MCF 10A (cell line): ENCODE measurements at regions of chr12 and their contacts with region 1.

Region 1: GRCh38 chr12:128771681-128772080 is 52.1 kb downstream of the SLC15A4 start:
- DNase-seq: peak; percentile 78
- H3K4me3 Mint-ChIP-seq: no peak overlapping the region
- H3K27ac Mint-ChIP-seq: no peak overlapping the region
- H3K4me1 Mint-ChIP-seq: no peaks in the 10 kb centered on the region
- H3K27me3 Mint-ChIP-seq: peaks cover 9% of the 10 kb centered on the region
- CTCF ChIP-seq: no peak

Region 2: DNA sequence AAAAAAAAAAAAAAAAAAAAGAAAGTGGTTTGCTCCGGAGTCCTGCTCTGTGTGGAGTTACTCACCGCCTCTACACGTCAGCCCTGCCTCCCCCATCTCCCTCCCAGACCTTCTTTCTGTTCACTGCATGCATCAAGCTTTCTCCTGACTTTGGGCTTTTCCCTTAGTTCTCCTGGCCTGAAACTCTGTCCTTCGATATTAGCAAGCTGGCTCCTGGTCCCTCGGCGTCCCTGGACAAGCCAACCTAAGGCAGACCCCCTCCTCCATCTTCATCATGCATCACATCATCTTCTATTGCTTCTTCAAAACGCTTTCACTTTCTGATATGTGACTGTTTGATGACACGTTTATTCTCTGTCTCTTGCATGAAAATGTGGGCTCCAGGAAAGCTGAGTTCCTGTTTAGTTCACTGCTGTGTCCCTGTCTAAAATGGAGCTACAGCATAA is 11.5 kb after region 1 on chr12:
- CTCF ChIA-PET with region 1: interaction called, 37 read pairs
- POLR2A ChIA-PET with region 1: no interaction called
- intact Hi-C with region 1: no loop called
- DNase-seq: peak; percentile 20
- H3K4me3 Mint-ChIP-seq: no peak overlapping the region
- H3K27ac Mint-ChIP-seq: no peak overlapping the region
- H3K4me1 Mint-ChIP-seq: peaks cover 8% of the 10 kb centered on the region
- H3K27me3 Mint-ChIP-seq: no peaks in the 10 kb centered on the region
- CTCF ChIP-seq: no peak

Region 3: GRCh38 chr12:129186952-129187351 is 415.3 kb after region 1 on chr12:
- CTCF ChIA-PET with region 1: no interaction called
- POLR2A ChIA-PET with region 1: no interaction called
- intact Hi-C with region 1: no loop called
- DNase-seq: no peak
- H3K4me3 Mint-ChIP-seq: no peak overlapping the region
- H3K27ac Mint-ChIP-seq: no peak overlapping the region
- H3K4me1 Mint-ChIP-seq: no peaks in the 10 kb centered on the region
- H3K27me3 Mint-ChIP-seq: no peaks in the 10 kb centered on the region
- CTCF ChIP-seq: no peak